PC-9 (cell line): ENCODE measurements at regions of chr3 and their contacts with region 1.

Region 1: DNA sequence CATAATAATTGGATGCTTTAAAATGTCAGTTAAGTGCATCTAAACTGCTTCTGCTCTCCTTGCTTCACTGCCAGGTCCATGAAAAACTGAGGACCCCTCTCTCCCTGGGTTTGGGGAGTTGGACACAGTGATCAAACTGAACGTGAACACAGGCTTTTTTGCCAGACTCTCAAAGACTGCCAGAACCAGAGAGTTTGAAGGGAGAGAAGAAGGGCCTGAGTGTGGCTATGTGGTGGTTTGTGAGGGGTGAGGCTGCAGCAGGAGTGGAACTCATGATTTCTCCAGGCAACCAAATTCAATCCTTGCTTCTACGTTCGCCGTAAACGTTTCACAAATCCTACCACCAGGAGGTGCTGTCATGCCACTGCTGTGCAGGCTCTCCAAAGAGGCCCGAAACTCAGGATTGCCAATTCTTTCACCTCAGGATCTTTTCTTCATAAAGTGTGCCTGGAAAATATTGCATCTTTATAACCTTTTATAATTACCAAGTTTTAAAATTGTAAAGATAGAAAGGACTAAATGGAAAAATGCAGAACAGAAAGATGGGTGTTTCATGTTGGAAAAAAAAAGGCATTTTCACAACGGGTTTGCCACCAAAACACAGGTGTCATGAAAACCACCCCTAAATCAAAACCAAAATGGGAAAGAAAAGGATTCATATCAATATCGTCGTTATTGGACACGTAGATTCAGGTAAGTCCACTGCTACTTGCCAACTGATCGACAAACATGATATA is 19.7 kb downstream of the TM4SF4 start:
- DNase-seq: peak in 1 of 2 experiments; percentile 51
- H3K4me3 ChIP-seq: no peak overlapping the region
- H3K27ac ChIP-seq: no peak overlapping the region
- H3K4me1 ChIP-seq: no peaks in the 10 kb centered on the region
- H3K27me3 ChIP-seq: no peaks in the 10 kb centered on the region
- CTCF ChIP-seq: peak; percentile 73

Region 2: GRCh38 chr3:149366941-149367840 is 127.0 kb before region 1 on chr3:
- CTCF ChIA-PET with region 1: no interaction called
- POLR2A ChIA-PET with region 1: interaction called, 25 read pairs
- intact Hi-C with region 1: no loop called
- DNase-seq: peak; percentile 86 to 99
- H3K4me3 ChIP-seq: 0 out of 2 replicates have a peak overlapping the region, but pooled peaks have one; percentile 6
- H3K27ac ChIP-seq: peak overlapping the region; percentile 99
- H3K4me1 ChIP-seq: peaks cover 63% of the 10 kb centered on the region
- H3K27me3 ChIP-seq: no peaks in the 10 kb centered on the region
- CTCF ChIP-seq: no peak

Region 3: DNA sequence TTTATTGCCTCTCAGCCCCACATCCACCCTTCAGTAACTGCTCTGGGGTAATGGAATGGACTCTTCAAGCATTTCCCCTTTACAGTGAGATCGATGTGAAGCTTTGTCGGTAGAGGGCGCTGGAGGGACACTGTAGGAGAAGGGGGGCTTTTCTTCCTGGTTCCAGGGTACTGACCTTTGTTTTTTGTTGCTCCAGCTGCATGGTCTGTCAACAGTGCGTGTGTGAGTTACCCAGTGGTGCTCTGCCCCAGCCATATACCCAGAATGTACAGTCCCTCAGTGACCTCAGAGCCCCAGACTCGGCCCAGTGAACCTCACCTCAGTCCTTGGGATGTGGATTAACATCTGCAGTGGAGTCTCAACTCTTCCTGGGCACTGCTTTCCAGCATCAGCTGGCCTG is 733.6 kb after region 1 on chr3:
- CTCF ChIA-PET with region 1: no interaction called
- POLR2A ChIA-PET with region 1: no interaction called
- intact Hi-C with region 1: loop called (anchors 10 kb)
- DNase-seq: peak in 1 of 2 experiments; percentile 65
- H3K4me3 ChIP-seq: no peak overlapping the region
- H3K27ac ChIP-seq: no peak overlapping the region
- H3K4me1 ChIP-seq: no peaks in the 10 kb centered on the region
- H3K27me3 ChIP-seq: no peaks in the 10 kb centered on the region
- CTCF ChIP-seq: peak; percentile 82